Tibial artery (tissue), 4 donors: ENCODE measurements at regions of chrX and their contacts with region 1.

Region 1: DNA sequence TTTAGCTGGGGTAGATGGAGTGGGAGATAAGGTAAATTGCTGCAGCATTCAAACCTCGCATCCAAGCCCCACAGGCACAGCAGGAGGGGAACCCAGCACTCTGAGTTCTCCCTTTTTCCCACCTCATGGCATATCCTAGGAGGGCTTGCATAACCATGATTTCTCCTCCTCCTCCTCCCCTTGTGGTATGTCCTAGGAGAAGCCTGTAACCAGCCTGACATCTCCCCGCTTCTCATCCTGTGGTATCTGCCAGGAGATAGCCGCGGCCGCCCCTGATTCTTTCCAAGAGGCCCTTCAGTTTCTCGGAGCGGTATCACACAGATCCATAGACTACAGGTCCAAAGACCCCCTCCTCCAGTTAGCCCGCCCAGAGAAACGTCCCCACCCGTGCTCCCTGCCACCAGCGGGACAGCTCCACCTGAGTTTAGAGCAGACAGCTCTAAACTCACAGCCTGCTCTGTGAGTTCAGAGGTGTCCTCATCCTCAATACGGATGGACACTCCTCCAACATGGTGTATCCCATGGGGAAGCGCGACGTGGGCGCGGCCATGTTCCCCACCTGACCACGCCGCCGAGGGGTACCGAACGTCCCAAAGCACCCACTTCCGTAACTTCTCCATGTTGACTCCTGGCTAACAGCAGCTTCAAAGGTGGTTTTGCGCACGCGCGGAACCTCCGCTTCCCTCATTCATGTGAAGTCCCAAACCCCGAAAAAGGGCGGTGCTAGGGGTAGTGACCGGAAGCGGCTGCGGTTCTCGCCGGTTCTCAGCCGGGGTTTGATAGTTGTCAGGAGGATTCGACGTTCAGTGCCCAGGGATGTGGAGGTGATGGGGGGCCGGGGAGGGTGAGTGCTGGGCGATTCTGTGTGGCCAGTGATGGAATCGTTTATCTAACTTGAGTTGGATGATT is at the start of gene ZNF81:
- DNase-seq: peak; percentile 97
- H3K4me3 ChIP-seq: peak within 1 kb of the TSS; percentile 51 to 60
- H3K27ac ChIP-seq: peak within 1 kb of the TSS; percentile 61 to 66
- H3K4me1 ChIP-seq: peaks cover 0 to 10% (median 2%) of the 10 kb centered on the region in 4 donors
- H3K27me3 ChIP-seq: no peaks in the 10 kb centered on the region
- CTCF ChIP-seq: no peak

Region 2: GRCh38 chrX:48021026-48021900 is 184.8 kb after region 1 on chrX:
- intact Hi-C with region 1: loop called (anchors 10 kb)
- DNase-seq: peak; percentile 56 to 82
- H3K4me3 ChIP-seq: peak overlapping the region; percentile 54 to 57
- H3K27ac ChIP-seq: peak overlapping the region; percentile 83 to 87
- H3K4me1 ChIP-seq: no peaks in the 10 kb centered on the region
- H3K27me3 ChIP-seq: no peaks in the 10 kb centered on the region
- CTCF ChIP-seq: no peak